Ascending aorta (tissue), 2 donors: ENCODE measurements at regions of chr7 and their contacts with region 1.

Region 1: DNA sequence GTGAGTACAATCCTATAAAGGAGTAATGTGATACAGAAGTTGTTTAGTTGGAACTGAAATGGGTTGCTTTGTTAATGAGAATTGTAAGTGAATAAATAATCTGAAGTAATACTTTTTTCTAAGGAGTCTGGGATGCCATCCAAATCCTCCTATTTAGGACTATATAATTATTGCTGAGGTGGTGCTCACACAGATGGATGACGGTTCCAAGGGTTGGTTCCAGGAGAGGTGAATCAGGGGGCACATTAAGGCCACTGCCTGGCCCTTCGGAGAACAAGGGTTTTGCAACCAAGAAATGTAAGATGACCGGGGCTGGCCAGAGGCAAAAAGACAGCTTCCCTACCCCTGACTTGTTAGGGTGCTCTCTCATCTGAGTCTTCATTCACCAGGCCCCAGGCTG is 352.7 kb downstream of the PHTF2 start:
- DNase-seq: no peak
- H3K4me3 ChIP-seq: no peak overlapping the region
- H3K27ac ChIP-seq: peak overlapping the region in 1 of 2 donors; percentile 5
- H3K4me1 ChIP-seq: peaks cover 0 to 6% of the 10 kb centered on the region in 2 donors
- H3K27me3 ChIP-seq: no peaks in the 10 kb centered on the region
- CTCF ChIP-seq: no peak

Region 2: GRCh38 chr7:78197447-78197846 is 46.2 kb after region 1 on chr7:
- intact Hi-C with region 1: loop called (anchors 5 kb)
- DNase-seq: no peak
- H3K4me3 ChIP-seq: no peak overlapping the region
- H3K27ac ChIP-seq: no peak overlapping the region
- H3K4me1 ChIP-seq: peaks cover 0 to 2% of the 10 kb centered on the region in 2 donors
- H3K27me3 ChIP-seq: no peaks in the 10 kb centered on the region
- CTCF ChIP-seq: no peak

Region 3: DNA sequence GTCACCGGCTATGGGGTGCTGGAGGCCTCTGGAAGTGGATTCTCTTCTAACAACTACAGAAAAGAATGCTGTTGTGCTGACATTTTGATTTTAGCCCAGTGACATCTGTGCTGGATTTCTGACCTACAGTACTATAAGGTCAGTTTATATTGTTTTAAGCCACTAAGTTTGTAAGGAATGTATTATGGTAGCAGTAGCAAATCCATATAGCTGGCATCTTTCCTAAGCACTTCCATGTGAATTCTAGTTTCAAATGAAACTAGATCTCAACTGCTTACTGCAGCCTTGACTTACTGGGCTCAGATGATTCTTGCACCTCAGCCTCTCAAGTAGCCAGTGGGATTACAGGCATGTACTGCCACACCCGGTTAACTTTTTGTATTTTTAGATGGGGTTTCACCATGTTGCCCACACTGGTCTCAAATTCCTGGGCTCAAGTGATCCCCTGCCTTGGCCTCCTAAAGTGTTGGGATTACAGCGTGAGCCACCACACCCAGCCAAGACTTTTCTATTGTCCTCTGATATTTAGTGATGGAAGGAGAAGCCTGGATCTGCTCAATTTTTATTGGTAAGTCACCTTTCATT is 61.3 kb after region 1 on chr7:
- intact Hi-C with region 1: loop called (anchors 5 kb)
- DNase-seq: no peak
- H3K4me3 ChIP-seq: no peak overlapping the region
- H3K27ac ChIP-seq: no peak overlapping the region
- H3K4me1 ChIP-seq: no peaks in the 10 kb centered on the region
- H3K27me3 ChIP-seq: no peaks in the 10 kb centered on the region
- CTCF ChIP-seq: no peak